ENCODE measurements at regions of chr6 and their contacts with region 1.

Region 1: DNA sequence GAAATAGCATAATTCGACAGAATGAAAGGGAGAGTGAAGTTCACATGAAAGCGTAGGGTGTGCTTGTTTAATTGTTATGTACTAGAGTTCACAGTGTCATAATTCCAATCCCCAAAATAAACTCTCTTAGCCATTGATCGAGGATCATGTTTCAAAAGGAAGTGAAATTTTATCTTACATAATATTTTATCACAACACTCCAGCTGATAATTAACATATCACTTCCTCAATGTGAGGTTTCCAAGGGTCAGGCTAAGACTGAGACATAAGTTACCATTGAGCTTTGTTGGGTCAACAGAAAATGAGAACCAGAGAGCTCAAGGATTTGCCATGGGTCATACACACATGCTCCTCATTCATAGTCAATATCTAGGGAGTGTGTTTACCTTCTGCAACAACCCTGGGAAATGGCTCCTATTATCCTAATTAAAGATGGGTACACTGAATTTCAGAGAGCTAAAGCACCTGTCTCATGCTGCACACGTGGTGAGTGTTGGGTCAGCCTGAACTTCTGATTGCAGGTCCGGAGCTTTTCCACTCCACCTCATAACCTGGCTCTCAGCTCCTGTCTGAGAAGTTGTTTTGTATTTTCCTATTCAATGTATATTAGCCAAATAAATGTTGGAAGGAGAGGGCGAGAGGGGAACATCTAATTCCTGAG is 3.0 kb downstream of the GSTA2 start:
- DNase-seq: no peak
- H3K4me3 ChIP-seq: no peak overlapping the region
- H3K4me3 Mint-ChIP-seq: no peak overlapping the region
- H3K27ac Mint-ChIP-seq: no peak overlapping the region
- H3K4me1 ChIP-seq: peaks cover 6% of the 10 kb centered on the region
- H3K4me1 Mint-ChIP-seq: peaks cover 10% of the 10 kb centered on the region
- H3K27me3 ChIP-seq: no peaks in the 10 kb centered on the region
- H3K27me3 Mint-ChIP-seq: no peaks in the 10 kb centered on the region
- CTCF ChIP-seq: no peak

Region 2: DNA sequence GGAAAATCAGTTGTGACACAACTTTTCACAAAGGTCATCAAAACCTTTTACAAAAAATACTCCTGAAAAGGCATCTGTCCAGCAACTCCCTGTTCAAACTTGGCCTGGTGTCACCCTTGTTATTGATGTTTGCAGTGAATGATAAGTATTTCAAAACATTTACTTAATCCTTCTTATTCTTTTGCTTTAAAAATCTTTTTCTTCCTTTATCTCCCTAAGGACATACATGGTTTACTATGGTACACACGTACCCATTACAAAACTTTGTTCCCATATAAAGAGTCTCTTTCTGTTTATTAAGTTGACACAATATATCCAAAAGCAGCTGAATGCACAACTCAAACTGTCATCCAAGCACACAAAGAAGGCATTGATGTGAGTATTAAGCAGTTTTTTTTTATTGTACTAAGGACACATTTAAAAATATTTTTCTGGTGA is 14.5 kb before region 1 on chr6:
- CTCF ChIA-PET with region 1: no interaction called
- POLR2A ChIA-PET with region 1: no interaction called
- intact Hi-C with region 1: loop called (anchors 1 kb)
- DNase-seq: peak in 1 of 2 experiments; percentile 36
- H3K4me3 ChIP-seq: no peak overlapping the region
- H3K4me3 Mint-ChIP-seq: no peak overlapping the region
- H3K27ac Mint-ChIP-seq: peak overlapping the region; percentile 85
- H3K4me1 ChIP-seq: peaks cover 27% of the 10 kb centered on the region
- H3K4me1 Mint-ChIP-seq: peaks cover 34% of the 10 kb centered on the region
- H3K27me3 ChIP-seq: no peaks in the 10 kb centered on the region
- H3K27me3 Mint-ChIP-seq: no peaks in the 10 kb centered on the region
- CTCF ChIP-seq: no peak

Region 3: GRCh38 chr6:53029257-53029656 is 269.0 kb after region 1 on chr6:
- CTCF ChIA-PET with region 1: no interaction called
- POLR2A ChIA-PET with region 1: no interaction called
- intact Hi-C with region 1: no loop called
- DNase-seq: no peak
- H3K4me3 ChIP-seq: no peak overlapping the region
- H3K4me3 Mint-ChIP-seq: no peak overlapping the region
- H3K27ac Mint-ChIP-seq: no peak overlapping the region
- H3K4me1 ChIP-seq: no peaks in the 10 kb centered on the region
- H3K4me1 Mint-ChIP-seq: no peaks in the 10 kb centered on the region
- H3K27me3 ChIP-seq: no peaks in the 10 kb centered on the region
- H3K27me3 Mint-ChIP-seq: no peaks in the 10 kb centered on the region
- CTCF ChIP-seq: no peak